ENCODE measurements at regions of chr7 and their contacts with region 1.

Region 1: GRCh38 chr7:123865517-123866117 is 20.6 kb downstream of the HYAL4 start:
- DNase-seq: peak in 5 of 9 experiments; percentile 11 to 71 (median 37)
- ATAC-seq: peak; percentile 69
- H3K4me3 ChIP-seq: no peak overlapping the region
- H3K4me3 Mint-ChIP-seq: no peak overlapping the region
- H3K27ac ChIP-seq: no peak overlapping the region
- H3K27ac Mint-ChIP-seq: no peak overlapping the region
- H3K4me1 ChIP-seq: no peaks in the 10 kb centered on the region
- H3K4me1 Mint-ChIP-seq: no peaks in the 10 kb centered on the region
- H3K27me3 ChIP-seq: no peaks in the 10 kb centered on the region
- H3K27me3 Mint-ChIP-seq: peaks cover 8% of the 10 kb centered on the region
- CTCF ChIP-seq: peak; percentile 84

Region 2: DNA sequence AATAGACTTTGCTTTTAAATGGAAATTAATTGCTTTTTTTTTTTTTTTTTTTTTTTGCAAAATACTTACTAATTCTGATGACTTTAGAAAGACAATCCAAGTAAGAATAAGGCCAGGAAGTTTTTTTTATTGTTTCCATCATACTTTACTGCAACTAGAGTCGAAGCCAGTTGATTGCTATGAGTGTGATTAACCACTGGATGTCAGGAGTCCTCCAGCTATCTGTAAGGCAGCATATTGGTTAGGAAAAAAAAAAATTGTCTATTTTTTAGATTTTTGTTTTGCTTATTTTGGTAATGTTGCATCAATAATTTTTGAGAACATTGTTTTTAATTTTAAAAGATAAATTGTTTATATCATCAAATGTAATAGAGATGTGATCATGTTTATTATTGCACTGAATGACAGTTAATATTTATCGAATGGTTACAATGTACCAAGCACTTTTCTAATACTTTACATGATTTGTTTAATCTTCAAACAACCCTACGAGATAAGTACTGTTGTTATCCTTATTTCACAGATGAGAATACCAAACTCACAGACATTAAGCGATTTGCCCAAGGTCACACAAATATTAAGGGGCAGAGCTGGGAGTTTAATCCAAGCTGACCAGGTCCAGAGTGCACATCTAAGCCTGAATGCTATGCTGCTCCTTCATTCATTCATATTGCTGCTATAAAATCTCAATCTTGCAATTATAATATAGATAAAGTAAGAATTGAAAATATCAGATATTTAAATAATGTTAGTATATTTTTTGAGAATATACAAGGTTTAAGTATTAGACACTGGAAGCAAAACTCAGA is 229.9 kb before region 1 on chr7:
- CTCF ChIA-PET with region 1: interaction called, 5 read pairs
- POLR2A ChIA-PET with region 1: no interaction called
- intact Hi-C with region 1: loop called (anchors 1 to 2 kb)
- DNase-seq: peak in 2 of 9 experiments; percentile 13 to 26
- ATAC-seq: no peak
- H3K4me3 ChIP-seq: no peak overlapping the region
- H3K4me3 Mint-ChIP-seq: no peak overlapping the region
- H3K27ac ChIP-seq: no peak overlapping the region
- H3K27ac Mint-ChIP-seq: no peak overlapping the region
- H3K4me1 ChIP-seq: no peaks in the 10 kb centered on the region
- H3K4me1 Mint-ChIP-seq: no peaks in the 10 kb centered on the region
- H3K27me3 ChIP-seq: no peaks in the 10 kb centered on the region
- H3K27me3 Mint-ChIP-seq: peaks cover 37% of the 10 kb centered on the region
- CTCF ChIP-seq: no peak

Region 3: GRCh38 chr7:123689250-123689649 is 176.4 kb before region 1 on chr7:
- CTCF ChIA-PET with region 1: interaction called, 16 read pairs
- POLR2A ChIA-PET with region 1: no interaction called
- intact Hi-C with region 1: no loop called
- DNase-seq: no peak
- ATAC-seq: no peak
- H3K4me3 ChIP-seq: no peak overlapping the region
- H3K4me3 Mint-ChIP-seq: no peak overlapping the region
- H3K27ac ChIP-seq: no peak overlapping the region
- H3K27ac Mint-ChIP-seq: no peak overlapping the region
- H3K4me1 ChIP-seq: no peaks in the 10 kb centered on the region
- H3K4me1 Mint-ChIP-seq: no peaks in the 10 kb centered on the region
- H3K27me3 ChIP-seq: no peaks in the 10 kb centered on the region
- H3K27me3 Mint-ChIP-seq: no peaks in the 10 kb centered on the region
- CTCF ChIP-seq: no peak

Region 4: DNA sequence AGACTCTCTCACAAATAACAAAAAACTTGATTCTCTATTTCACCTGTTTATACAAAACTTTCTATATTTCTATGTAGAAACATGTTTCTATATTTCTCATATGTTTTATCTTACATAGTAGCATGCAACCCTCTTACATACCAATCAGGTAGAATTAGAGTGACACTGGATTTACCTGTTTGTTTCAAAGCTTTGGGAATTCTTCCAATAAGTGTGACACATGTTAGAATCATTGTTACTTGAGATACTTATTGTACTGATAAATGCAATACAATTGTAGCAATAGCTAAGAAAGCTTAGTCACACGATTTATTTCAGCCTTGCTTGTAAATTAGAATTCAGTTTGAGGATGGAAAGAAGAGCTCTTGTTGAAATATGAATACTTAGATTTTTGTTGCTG is 15.8 kb before region 1 on chr7:
- CTCF ChIA-PET with region 1: interaction called, 13 read pairs
- POLR2A ChIA-PET with region 1: no interaction called
- intact Hi-C with region 1: no loop called
- DNase-seq: no peak
- ATAC-seq: no peak
- H3K4me3 ChIP-seq: no peak overlapping the region
- H3K4me3 Mint-ChIP-seq: no peak overlapping the region
- H3K27ac ChIP-seq: no peak overlapping the region
- H3K27ac Mint-ChIP-seq: no peak overlapping the region
- H3K4me1 ChIP-seq: no peaks in the 10 kb centered on the region
- H3K4me1 Mint-ChIP-seq: no peaks in the 10 kb centered on the region
- H3K27me3 ChIP-seq: no peaks in the 10 kb centered on the region
- H3K27me3 Mint-ChIP-seq: peaks cover 6% of the 10 kb centered on the region
- CTCF ChIP-seq: no peak